MCF 10A (cell line): ENCODE measurements at regions of chr17 and their contacts with region 1.

Region 1: GRCh38 chr17:17972126-17972951 is at the starts of genes DRC3 and TOM1L2:
- DNase-seq: peak; percentile 100
- H3K4me3 Mint-ChIP-seq: peak within 1 kb of the TSS; percentile 90
- H3K27ac Mint-ChIP-seq: peak within 1 kb of the TSS; percentile 98
- H3K4me1 Mint-ChIP-seq: peaks cover 14% of the 10 kb centered on the region
- H3K27me3 Mint-ChIP-seq: no peaks in the 10 kb centered on the region
- CTCF ChIP-seq: no peak
- total RNA-seq, gene DRC3: 2.3 and 3.1 TPM in 2 replicates
- total RNA-seq, gene TOM1L2: 34.2 and 44.3 TPM in 2 replicates

Region 2: DNA sequence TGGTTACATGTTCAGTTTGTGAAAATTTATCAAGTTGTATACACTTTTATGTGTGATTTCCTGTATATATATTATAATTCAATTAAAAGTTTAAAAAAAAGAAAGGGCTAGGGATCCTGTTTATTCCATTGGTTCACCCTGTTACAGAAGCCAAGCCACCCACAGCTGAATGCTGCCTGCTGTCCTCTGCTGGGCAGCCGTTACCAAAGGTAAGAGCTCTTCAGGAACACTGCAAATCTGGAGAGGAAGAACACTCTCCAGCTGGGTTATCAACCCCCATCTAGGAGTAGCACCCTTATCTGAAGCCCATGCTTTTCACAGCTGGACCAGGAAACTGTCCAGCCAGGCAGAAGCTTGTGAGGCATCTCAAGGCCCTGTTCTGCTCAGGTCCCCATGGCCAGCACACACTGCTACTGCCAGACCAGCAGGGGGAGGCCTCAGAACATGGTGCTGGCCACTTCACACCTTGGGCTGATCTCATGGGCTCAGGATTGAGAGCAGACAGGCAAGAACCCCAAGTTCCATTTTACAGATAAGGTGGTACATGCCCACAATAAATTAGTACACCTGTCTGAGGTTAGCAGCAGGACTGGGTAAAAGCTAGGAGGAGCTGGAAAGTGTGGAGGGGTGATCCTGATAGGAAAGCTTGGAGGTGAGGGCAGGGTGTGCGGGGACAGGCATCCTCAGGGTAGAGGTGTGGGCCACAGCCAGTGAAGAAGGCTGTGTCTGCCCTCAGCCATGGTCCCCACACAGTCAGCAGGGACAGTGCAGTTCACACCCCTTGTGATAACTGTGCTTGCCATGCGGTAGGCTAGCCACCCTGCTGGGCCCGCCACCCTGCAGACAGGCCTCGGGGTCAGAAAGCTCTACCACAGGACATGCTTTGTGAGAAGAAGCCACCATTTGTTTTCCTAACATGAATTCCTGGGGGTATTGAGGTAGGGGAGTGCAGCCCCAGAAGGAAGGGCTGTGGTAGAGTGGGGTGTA is 81.3 kb before region 1 on chr17:
- CTCF ChIA-PET with region 1: interaction called, 3 read pairs
- POLR2A ChIA-PET with region 1: no interaction called
- intact Hi-C with region 1: loop called (anchors 2 kb)
- DNase-seq: peak; percentile 71
- H3K4me3 Mint-ChIP-seq: no peak overlapping the region
- H3K27ac Mint-ChIP-seq: peak overlapping the region; percentile 21
- H3K4me1 Mint-ChIP-seq: no peaks in the 10 kb centered on the region
- H3K27me3 Mint-ChIP-seq: no peaks in the 10 kb centered on the region
- CTCF ChIP-seq: peak; percentile 77

Region 3: DNA sequence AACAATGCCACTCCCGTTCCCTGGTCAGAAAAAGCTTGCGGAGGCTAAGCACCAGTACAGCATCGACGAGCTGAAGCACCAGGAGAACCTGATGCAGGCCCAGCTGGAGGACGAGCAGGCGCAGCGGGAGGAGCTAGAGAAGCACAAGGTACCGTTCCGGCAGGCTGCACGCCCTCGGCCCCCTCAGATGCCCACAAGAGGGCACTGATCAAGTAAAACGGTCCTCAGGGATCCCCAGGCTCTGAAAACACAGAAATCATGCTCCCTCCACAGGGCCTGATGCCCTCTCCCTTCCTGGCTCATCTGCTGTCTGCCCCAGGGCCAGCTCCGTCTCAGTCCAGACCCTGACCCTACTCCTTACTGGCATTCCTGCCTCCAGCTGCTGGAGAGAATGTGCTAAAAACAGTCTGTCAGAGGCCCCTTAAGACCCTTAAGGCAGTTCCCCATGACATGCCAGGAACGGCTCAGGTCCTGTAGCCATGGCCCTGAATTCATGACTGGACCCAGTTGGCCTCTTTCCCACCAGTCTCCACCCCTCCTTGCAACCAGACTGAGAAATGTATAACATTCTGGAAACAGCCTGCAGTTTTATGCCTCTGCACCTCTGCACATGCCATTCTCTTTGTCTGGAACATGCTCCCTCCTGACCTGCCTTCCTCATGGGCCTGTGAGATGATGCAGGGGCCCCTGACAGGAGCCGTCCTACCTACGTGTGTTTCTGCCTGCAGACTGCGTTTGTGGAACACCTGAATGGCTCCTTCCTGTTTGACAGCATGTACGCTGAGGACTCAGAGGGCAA is 22.1 kb after region 1 on chr17:
- CTCF ChIA-PET with region 1: interaction called, 3 read pairs
- POLR2A ChIA-PET with region 1: no interaction called
- intact Hi-C with region 1: loop called (anchors 2 kb)
- DNase-seq: no peak
- H3K4me3 Mint-ChIP-seq: no peak overlapping the region
- H3K27ac Mint-ChIP-seq: no peak overlapping the region
- H3K4me1 Mint-ChIP-seq: peaks cover 24% of the 10 kb centered on the region
- H3K27me3 Mint-ChIP-seq: no peaks in the 10 kb centered on the region
- CTCF ChIP-seq: peak; percentile 3

Region 4: GRCh38 chr17:18025945-18026776 is 53.8 kb after region 1 on chr17:
- CTCF ChIA-PET with region 1: interaction called, 6 read pairs
- POLR2A ChIA-PET with region 1: interaction called, 11 read pairs
- intact Hi-C with region 1: loop called (anchors 1 kb)
- DNase-seq: peak; percentile 88
- H3K4me3 Mint-ChIP-seq: peak overlapping the region; percentile 26
- H3K27ac Mint-ChIP-seq: peak overlapping the region; percentile 46
- H3K4me1 Mint-ChIP-seq: peaks cover 15% of the 10 kb centered on the region
- H3K27me3 Mint-ChIP-seq: no peaks in the 10 kb centered on the region
- CTCF ChIP-seq: no peak

Region 5: GRCh38 chr17:18038861-18039534 is 66.7 kb after region 1 on chr17 and contains the starts of genes ATPAF2 and GID4:
- CTCF ChIA-PET with region 1: interaction called, 3 read pairs
- POLR2A ChIA-PET with region 1: interaction called, 9 read pairs
- intact Hi-C with region 1: loop called (anchors 1 kb)
- DNase-seq: peak; percentile 99
- H3K4me3 Mint-ChIP-seq: peak within 1 kb of the TSS; percentile 75
- H3K27ac Mint-ChIP-seq: peak within 1 kb of the TSS; percentile 72
- H3K4me1 Mint-ChIP-seq: peaks cover 40% of the 10 kb centered on the region
- H3K27me3 Mint-ChIP-seq: no peaks in the 10 kb centered on the region
- CTCF ChIP-seq: no peak
- total RNA-seq, gene ATPAF2: 12.4 and 18.6 TPM in 2 replicates
- total RNA-seq, gene GID4: 9.8 and 11.0 TPM in 2 replicates